Heart left ventricle (tissue), 16 donors: ENCODE measurements at regions of chr1 and their contacts with region 1.

Region 1: GRCh38 chr1:182084487-182085316 is 23.2 kb upstream of the ZNF648 start:
- DNase-seq: peak; percentile 81 to 87 (median 82)
- ATAC-seq: peak; percentile 83 to 97 (median 94)
- H3K4me3 ChIP-seq: no peak overlapping the region
- H3K27ac ChIP-seq: no peak overlapping the region
- H3K4me1 ChIP-seq: peaks cover 0 to 14% (median 1%) of the 10 kb centered on the region in 12 donors
- H3K27me3 ChIP-seq: no peaks in the 10 kb centered on the region
- CTCF ChIP-seq: peak; percentile 77 to 89 (median 81)
- POLR2A ChIP-seq: no peak

Region 2: GRCh38 chr1:181398544-181398943 is 686.2 kb before region 1 on chr1:
- intact Hi-C with region 1: no loop called
- DNase-seq: no peak
- ATAC-seq: no peak
- H3K4me3 ChIP-seq: no peak overlapping the region
- H3K27ac ChIP-seq: peak overlapping the region in 1 of 12 donors; percentile 2
- H3K4me1 ChIP-seq: no peaks in the 10 kb centered on the region
- H3K27me3 ChIP-seq: peaks cover 0 to 11% (median 0%) of the 10 kb centered on the region in 9 donors
- CTCF ChIP-seq: no peak
- POLR2A ChIP-seq: no peak

Region 3: GRCh38 chr1:182143154-182143657 is 58.5 kb after region 1 on chr1:
- intact Hi-C with region 1: loop called in 8 of 10 experiments (anchors 2 to 5 kb)
- DNase-seq: peak; percentile 89 to 95 (median 91)
- ATAC-seq: peak; percentile 58 to 86 (median 74)
- H3K4me3 ChIP-seq: no peak overlapping the region
- H3K27ac ChIP-seq: peak overlapping the region; percentile 69 to 97 (median 84)
- H3K4me1 ChIP-seq: peaks cover 7 to 53% (median 21%) of the 10 kb centered on the region in 12 donors
- H3K27me3 ChIP-seq: peaks cover 0 to 5% (median 0%) of the 10 kb centered on the region in 9 donors
- CTCF ChIP-seq: peak; percentile 87 to 98 (median 96)
- POLR2A ChIP-seq: no peak

Region 4: GRCh38 chr1:182588500-182589452 is 504.1 kb after region 1 on chr1 and contains the start of gene RNASEL:
- intact Hi-C with region 1: loop called in 6 of 10 experiments (anchors 10 kb)
- DNase-seq: peak; percentile 70 to 82 (median 76)
- ATAC-seq: peak; percentile 82 to 94 (median 92)
- H3K4me3 ChIP-seq: peak within 1 kb of the TSS; percentile 49 to 90 (median 74)
- H3K27ac ChIP-seq: peak within 1 kb of the TSS; percentile 51 to 99 (median 92)
- H3K4me1 ChIP-seq: peaks cover 0 to 40% (median 6%) of the 10 kb centered on the region in 12 donors
- H3K27me3 ChIP-seq: no peaks in the 10 kb centered on the region
- CTCF ChIP-seq: no peak
- POLR2A ChIP-seq: peak in 1 of 2 donors; percentile 33
- total RNA-seq, gene RNASEL: 2.0 to 6.3 (median 3.0) TPM

Region 5: DNA sequence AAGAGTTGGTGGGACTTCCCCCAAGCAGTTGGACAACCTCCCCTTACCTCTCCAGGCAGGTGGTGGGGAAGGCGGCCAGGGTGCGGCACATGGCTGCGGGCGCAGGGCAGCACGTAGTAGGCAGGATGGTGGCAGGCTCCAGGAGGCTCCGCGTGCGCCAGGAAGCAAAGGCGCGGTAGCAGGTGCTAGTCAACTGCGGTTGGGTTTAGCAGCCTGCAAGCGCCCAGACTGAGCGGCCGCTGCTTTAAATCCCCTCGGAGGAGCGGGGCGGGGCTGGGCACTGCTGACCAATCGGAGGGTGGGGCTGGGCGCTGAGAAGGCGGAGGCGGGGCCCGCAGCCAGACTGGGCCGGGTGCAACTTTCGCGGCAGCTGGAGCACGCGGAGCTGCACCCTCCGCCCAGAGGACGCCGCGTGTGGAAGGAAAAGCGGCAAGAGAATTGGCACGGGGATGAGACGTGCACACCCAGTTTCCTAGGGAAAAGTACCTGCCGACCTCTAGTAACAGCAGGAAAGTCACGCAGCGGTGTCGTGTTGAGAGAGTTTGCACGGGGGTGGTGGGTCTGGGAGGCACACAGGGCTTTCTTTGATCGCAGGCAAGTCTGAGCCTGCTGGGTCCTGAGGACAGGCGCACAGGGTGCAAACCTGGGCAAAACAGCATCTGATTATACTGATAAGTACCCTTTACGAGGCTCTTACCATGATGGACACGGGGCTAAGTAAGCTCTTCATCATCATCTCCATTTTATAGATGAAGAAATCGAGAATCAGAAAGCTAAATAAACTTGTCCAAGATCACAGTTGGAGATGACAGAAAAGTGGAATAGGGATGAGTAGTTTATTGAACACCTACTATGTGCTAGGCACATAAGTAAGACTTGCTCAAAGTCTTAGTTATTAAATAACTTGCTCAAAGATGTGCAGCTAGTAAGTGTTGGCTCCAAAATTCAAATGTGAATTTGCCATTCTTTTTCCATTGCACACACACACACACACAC is 519.8 kb after region 1 on chr1 and contains the start of gene RGS16:
- intact Hi-C with region 1: loop called in 8 of 10 experiments (anchors 5 to 10 kb)
- DNase-seq: peak; percentile 96 to 97 (median 96)
- ATAC-seq: peak; percentile 96 to 98 (median 98)
- H3K4me3 ChIP-seq: peak within 1 kb of the TSS; percentile 33 to 94 (median 60)
- H3K27ac ChIP-seq: peak within 1 kb of the TSS in 11 of 12 donors; percentile 16 to 76 (median 52)
- H3K4me1 ChIP-seq: peaks cover 0 to 58% (median 21%) of the 10 kb centered on the region in 12 donors
- H3K27me3 ChIP-seq: no peaks in the 10 kb centered on the region
- CTCF ChIP-seq: no peak
- POLR2A ChIP-seq: peak; percentile 7 to 92
- total RNA-seq, gene RGS16: 0.75 to 9.3 (median 2.0) TPM

Region 6: GRCh38 chr1:182789138-182790076 is 704.7 kb after region 1 on chr1 and contains the start of gene NPL:
- intact Hi-C with region 1: loop called in 9 of 10 experiments (anchors 2 to 10 kb)
- DNase-seq: peak; percentile 86 to 94 (median 87)
- ATAC-seq: peak; percentile 82 to 98 (median 98)
- H3K4me3 ChIP-seq: peak within 1 kb of the TSS; percentile 41 to 79 (median 64)
- H3K27ac ChIP-seq: peak within 1 kb of the TSS in 11 of 12 donors; percentile 8 to 88 (median 68)
- H3K4me1 ChIP-seq: peaks cover 0 to 42% (median 7%) of the 10 kb centered on the region in 12 donors
- H3K27me3 ChIP-seq: no peaks in the 10 kb centered on the region
- CTCF ChIP-seq: peak in 1 of 12 donors; percentile 7
- POLR2A ChIP-seq: peak in 1 of 2 donors; percentile 90
- total RNA-seq, gene NPL: 1.4 to 62.7 (median 3.0) TPM

Region 7: DNA sequence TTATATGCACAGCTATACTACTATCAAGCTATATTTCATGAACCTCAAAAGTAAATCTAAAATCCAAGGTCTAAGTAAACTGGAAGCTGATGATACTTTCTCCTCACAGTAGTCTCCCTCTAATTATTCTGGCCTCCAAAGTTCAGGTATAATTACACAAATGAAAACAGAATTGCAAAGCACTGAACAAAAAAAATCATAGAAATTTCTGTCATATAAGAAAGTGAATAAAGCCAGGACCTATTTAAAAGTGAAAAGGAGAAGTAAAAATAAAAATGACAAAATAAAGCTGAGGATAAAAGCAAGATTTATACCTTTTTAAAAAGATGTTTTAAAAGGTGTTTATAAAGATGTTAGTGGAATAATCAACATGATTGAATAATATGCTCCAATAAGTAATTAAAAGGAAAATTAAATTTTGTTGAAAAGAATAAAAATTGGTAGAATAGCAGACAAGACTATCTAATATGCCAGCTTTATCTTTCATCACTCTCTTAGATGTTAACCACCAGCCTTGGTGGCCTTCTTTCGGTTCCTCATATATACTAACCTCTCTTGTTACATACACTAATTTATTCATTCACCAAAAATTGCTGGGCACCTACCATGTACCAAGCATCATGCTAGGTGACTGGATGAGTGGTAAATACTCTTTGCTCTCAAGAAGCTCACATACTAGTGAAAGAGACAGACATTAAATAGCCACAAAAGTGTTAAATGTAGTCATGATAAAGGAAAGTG is 843.2 kb after region 1 on chr1:
- intact Hi-C with region 1: no loop called
- DNase-seq: no peak
- ATAC-seq: no peak
- H3K4me3 ChIP-seq: no peak overlapping the region
- H3K27ac ChIP-seq: no peak overlapping the region
- H3K4me1 ChIP-seq: no peaks in the 10 kb centered on the region
- H3K27me3 ChIP-seq: no peaks in the 10 kb centered on the region
- CTCF ChIP-seq: no peak
- POLR2A ChIP-seq: no peak